PC-3 (cell line): ENCODE measurements at regions of chr21 and their contacts with region 1.

Region 1: DNA sequence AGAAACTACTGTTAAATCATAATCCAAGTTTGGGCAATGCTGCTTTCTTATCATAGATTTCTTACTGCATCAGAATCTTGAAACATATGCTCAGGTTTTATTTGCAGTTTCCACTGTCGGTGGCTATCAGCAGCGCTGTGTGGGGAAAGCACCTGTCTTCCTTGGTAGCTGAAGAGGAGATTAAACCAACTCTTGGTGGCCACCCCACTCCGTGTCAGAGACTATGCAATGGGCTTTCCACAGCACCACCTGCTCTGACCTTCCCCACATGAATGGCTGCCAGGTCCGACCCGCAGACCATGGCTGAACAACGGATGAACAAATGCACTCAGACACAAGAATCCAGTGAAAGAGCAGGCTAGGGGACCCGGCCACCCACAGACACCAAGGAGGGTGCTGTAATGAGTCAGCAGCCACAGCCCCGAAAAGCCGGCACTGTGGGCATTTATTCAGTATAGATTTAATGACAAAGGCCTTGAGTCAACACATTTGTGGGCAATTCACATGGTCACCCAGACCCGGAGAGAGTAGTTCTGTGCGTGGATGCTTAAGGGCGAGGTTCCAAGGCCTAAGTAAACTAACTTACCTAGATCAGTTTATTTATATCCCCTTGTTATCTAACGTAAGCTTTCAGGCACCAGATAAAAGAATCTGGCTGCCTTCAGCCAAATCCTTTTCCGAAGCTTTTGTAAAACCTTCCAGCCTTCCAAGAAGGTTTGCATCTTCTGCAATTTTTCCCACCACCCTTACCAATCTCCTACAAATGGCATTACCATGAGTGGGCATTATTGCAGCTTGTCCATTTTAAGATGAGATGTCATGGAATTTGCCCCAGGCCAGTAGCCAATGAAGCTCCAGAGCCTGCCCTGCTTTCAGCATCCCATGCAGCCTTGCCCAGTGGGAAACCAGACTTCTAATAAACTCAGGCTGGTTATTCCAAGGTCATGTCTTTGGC is 82.7 kb downstream of the HLCS start:
- DNase-seq: peak; percentile 91
- ATAC-seq: peak; percentile 95
- H3K4me3 ChIP-seq: no peak overlapping the region
- H3K27ac ChIP-seq: peak overlapping the region; percentile 95
- H3K4me1 ChIP-seq: peaks cover 22% of the 10 kb centered on the region
- H3K27me3 ChIP-seq: no peaks in the 10 kb centered on the region
- CTCF ChIP-seq: no peak

Region 2: GRCh38 chr21:36511484-36512220 is 372.2 kb before region 1 on chr21:
- CTCF ChIA-PET with region 1: no interaction called
- POLR2A ChIA-PET with region 1: no interaction called
- intact Hi-C with region 1: no loop called
- DNase-seq: no peak
- ATAC-seq: no peak
- H3K4me3 ChIP-seq: no peak overlapping the region
- H3K27ac ChIP-seq: no peak overlapping the region
- H3K4me1 ChIP-seq: peaks cover 45% of the 10 kb centered on the region
- H3K27me3 ChIP-seq: no peaks in the 10 kb centered on the region
- CTCF ChIP-seq: no peak

Region 3: DNA sequence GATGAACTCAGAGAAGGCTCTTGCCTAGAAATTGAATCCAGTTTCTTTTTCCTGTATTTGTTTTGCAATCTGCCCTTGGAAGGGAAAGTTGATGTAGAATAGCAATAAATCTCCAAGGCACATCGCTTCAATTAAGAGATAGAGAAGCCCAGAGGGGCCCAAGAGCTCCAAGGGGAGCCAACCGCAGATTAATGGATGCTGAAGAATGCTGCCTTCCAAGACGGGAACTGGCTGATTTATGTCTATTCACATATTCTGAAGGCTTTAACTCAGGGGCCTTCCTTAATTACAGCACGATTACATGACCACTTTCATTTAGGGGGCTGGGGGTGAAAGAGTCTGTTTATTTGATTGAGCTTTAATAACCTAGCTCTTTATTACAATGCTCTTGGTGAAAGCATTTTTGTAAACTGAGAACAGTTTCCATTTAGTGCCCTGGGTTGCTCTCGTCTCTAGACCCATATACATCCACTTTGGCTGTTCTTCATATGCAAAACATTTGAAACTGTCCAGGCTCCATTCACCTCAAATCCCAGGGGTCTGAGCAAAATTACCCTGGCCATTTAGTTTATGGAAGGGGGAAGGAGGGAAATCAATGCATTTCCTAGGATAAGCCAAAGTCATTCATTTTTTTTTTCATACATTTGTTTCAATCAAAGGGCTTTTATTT is 316.5 kb before region 1 on chr21:
- CTCF ChIA-PET with region 1: no interaction called
- POLR2A ChIA-PET with region 1: no interaction called
- intact Hi-C with region 1: no loop called
- DNase-seq: no peak
- ATAC-seq: no peak
- H3K4me3 ChIP-seq: no peak overlapping the region
- H3K27ac ChIP-seq: no peak overlapping the region
- H3K4me1 ChIP-seq: no peaks in the 10 kb centered on the region
- H3K27me3 ChIP-seq: no peaks in the 10 kb centered on the region
- CTCF ChIP-seq: no peak

Region 4: GRCh38 chr21:36854391-36854790 is 29.4 kb before region 1 on chr21:
- CTCF ChIA-PET with region 1: no interaction called
- POLR2A ChIA-PET with region 1: no interaction called
- intact Hi-C with region 1: no loop called
- DNase-seq: peak; percentile 62
- ATAC-seq: no peak
- H3K4me3 ChIP-seq: no peak overlapping the region
- H3K27ac ChIP-seq: no peak overlapping the region
- H3K4me1 ChIP-seq: peaks cover 54% of the 10 kb centered on the region
- H3K27me3 ChIP-seq: no peaks in the 10 kb centered on the region
- CTCF ChIP-seq: peak; percentile 85

Region 5: DNA sequence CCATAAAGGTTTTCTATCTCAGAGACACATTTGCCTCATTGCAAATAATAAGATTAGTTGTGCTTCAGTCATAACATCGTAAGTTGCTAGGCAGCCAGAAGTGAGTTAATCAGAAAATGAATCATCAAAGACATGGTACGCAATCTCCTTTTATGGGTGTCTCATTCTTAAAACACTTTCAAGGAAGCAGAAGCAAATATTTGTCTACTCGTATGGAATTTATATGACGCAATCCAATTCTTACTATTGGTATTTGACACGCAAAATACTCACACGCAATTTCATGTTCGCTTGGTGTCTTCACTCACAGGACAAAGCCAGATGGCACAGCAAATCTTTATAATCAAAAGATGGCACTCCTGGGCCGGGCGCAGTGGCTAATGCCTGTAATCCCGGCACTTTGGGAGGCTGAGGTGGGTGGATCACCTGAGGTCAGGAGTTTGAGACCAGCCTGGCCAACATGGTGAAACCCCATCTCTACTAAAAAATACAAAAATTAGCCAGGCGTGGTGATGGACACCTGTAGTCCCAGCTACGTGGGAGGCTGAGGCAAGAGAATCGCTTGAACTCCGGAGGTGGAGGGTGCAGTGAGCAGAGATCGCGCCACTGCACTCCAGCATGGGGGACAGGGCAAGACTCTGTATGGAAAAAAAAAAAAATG is 26.2 kb after region 1 on chr21:
- CTCF ChIA-PET with region 1: no interaction called
- POLR2A ChIA-PET with region 1: interaction called, 5 read pairs
- intact Hi-C with region 1: loop called (anchors 1 kb)
- DNase-seq: peak; percentile 99
- ATAC-seq: peak; percentile 82
- H3K4me3 ChIP-seq: no peak overlapping the region
- H3K27ac ChIP-seq: peak overlapping the region; percentile 98
- H3K4me1 ChIP-seq: peaks cover 43% of the 10 kb centered on the region
- H3K27me3 ChIP-seq: no peaks in the 10 kb centered on the region
- CTCF ChIP-seq: no peak

Region 6: GRCh38 chr21:36959020-36959835 is 75.4 kb after region 1 on chr21:
- CTCF ChIA-PET with region 1: no interaction called
- POLR2A ChIA-PET with region 1: no interaction called
- intact Hi-C with region 1: no loop called
- DNase-seq: no peak
- ATAC-seq: peak; percentile 37; the same call in 1 of the 2 replicates
- H3K4me3 ChIP-seq: no peak overlapping the region
- H3K27ac ChIP-seq: no peak overlapping the region
- H3K4me1 ChIP-seq: no peaks in the 10 kb centered on the region
- H3K27me3 ChIP-seq: no peaks in the 10 kb centered on the region
- CTCF ChIP-seq: no peak